Gastrocnemius medialis (tissue), 4 donors: ENCODE measurements at regions of chr14 and their contacts with region 1.

Region 1: GRCh38 chr14:68816262-68816942 is 23.5 kb upstream of the ZFP36L1 start:
- DNase-seq: peak; percentile 81 to 85
- ATAC-seq: peak; percentile 86 to 91
- H3K4me3 ChIP-seq: peak overlapping the region; percentile 55 to 84 (median 75)
- H3K27ac ChIP-seq: peak overlapping the region; percentile 94 to 100 (median 96)
- H3K4me1 ChIP-seq: peaks cover 34 to 36% of the 10 kb centered on the region in 2 donors
- H3K27me3 ChIP-seq: no peaks in the 10 kb centered on the region
- CTCF ChIP-seq: peak; percentile 97 to 100 (median 98)
- POLR2A ChIP-seq: peak; percentile 51 to 65

Region 2: DNA sequence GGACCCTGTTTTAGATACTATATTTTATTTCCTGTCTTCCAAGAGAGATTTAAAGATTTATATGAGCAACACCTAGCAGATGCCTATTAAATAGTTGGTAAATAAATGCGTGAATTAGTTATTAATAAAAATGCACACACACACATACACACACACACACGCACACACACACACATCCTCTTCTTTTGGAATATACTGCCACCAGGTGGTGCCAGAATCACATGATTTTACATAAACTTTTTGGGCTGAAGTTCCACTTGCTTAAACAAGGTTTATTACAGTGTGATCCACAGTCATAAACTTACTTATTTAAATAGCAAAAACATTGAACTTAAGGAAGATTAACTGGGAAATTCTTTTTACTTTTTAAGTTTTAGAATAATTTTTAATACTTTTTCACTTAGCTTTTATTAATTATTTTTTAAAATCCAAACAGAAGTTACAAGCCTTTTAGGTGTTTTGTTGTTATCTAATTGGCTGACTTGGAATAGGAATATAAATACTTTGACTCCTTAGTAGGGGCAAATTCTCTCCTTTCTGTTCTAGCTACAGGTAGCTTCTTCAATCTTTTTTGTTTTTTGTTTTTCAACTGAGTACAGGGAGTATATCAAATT is 979.3 kb before region 1 on chr14:
- in situ Hi-C with region 1: no loop called
- intact Hi-C with region 1: loop called (anchors 5 kb)
- DNase-seq: peak in 1 of 2 donors; percentile 20
- ATAC-seq: peak in 1 of 2 donors; percentile 46
- H3K4me3 ChIP-seq: no peak overlapping the region
- H3K27ac ChIP-seq: no peak overlapping the region
- H3K4me1 ChIP-seq: no peaks in the 10 kb centered on the region
- H3K27me3 ChIP-seq: no peaks in the 10 kb centered on the region
- CTCF ChIP-seq: peak; percentile 32 to 53 (median 39)
- POLR2A ChIP-seq: no peak

Region 3: GRCh38 chr14:67883717-67884116 is 932.7 kb before region 1 on chr14:
- in situ Hi-C with region 1: no loop called
- intact Hi-C with region 1: loop called (anchors 5 kb)
- DNase-seq: no peak
- ATAC-seq: no peak
- H3K4me3 ChIP-seq: no peak overlapping the region
- H3K27ac ChIP-seq: no peak overlapping the region
- H3K4me1 ChIP-seq: no peaks in the 10 kb centered on the region
- H3K27me3 ChIP-seq: no peaks in the 10 kb centered on the region
- CTCF ChIP-seq: peak in 3 of 5 experiments; percentile 13 to 38 (median 26)
- POLR2A ChIP-seq: no peak